ENCODE measurements at regions of chr1 and their contacts with region 1.

Region 1: DNA sequence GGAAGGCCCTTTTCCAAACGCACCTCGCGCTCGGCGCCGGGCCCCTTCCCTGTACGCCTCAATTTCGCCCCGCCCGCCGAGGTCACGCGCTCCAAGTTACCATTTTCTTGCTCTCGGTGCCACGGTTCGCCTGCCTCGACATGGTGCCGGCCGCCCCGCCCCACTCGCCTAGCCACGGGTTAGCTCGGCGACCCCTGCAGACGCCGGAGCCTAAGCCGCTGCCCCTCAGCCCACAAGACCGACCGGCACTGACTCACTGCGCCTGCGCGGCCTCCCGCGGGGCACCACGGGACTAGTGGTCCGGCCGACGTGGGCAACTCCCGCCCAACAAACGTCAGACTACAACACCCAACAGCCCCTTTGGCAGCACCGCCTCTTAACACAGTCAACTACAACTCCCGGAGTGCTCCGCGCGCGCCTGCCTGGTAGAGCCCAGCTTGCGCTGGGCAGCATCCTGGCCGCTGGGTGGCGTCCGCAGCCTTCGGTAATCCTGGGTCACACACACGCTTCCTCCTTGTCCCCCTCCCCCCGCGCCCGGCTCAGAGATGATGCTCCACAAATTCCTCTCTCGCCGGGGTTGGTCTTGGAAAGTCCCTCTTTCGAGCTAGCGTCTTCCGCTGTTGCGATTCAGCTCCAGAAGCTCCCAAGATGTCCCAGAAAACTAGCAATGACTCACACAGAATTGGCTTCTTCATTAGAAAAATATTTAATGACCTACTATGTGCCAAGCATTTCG is at the start of gene TRAPPC3:
- DNase-seq: peak; percentile 100
- H3K4me3 ChIP-seq: peak within 1 kb of the TSS; percentile 62
- H3K27ac ChIP-seq: peak within 1 kb of the TSS; percentile 80
- H3K4me1 ChIP-seq: peaks cover 33% of the 10 kb centered on the region
- H3K27me3 ChIP-seq: no peaks in the 10 kb centered on the region
- CTCF ChIP-seq: peak; percentile 99
- total RNA-seq, gene TRAPPC3: 86.5 and 86.6 TPM in 2 replicates

Region 2: GRCh38 chr1:36081926-36082485 is 67.4 kb before region 1 on chr1:
- CTCF ChIA-PET with region 1: no interaction called
- POLR2A ChIA-PET with region 1: no interaction called
- intact Hi-C with region 1: no loop called
- DNase-seq: no peak
- H3K4me3 ChIP-seq: no peak overlapping the region
- H3K27ac ChIP-seq: no peak overlapping the region
- H3K4me1 ChIP-seq: no peaks in the 10 kb centered on the region
- H3K27me3 ChIP-seq: no peaks in the 10 kb centered on the region
- CTCF ChIP-seq: no peak

Region 3: GRCh38 chr1:36162680-36163239 is 13.4 kb after region 1 on chr1:
- CTCF ChIA-PET with region 1: interaction called, 4 read pairs
- POLR2A ChIA-PET with region 1: interaction called, 15 read pairs
- intact Hi-C with region 1: no loop called
- DNase-seq: no peak
- H3K4me3 ChIP-seq: no peak overlapping the region
- H3K27ac ChIP-seq: no peak overlapping the region
- H3K4me1 ChIP-seq: peaks cover 34% of the 10 kb centered on the region
- H3K27me3 ChIP-seq: no peaks in the 10 kb centered on the region
- CTCF ChIP-seq: no peak

Region 4: GRCh38 chr1:36199934-36200741 is 50.7 kb after region 1 on chr1:
- CTCF ChIA-PET with region 1: interaction called, 10 read pairs
- POLR2A ChIA-PET with region 1: no interaction called
- intact Hi-C with region 1: no loop called
- DNase-seq: no peak
- H3K4me3 ChIP-seq: no peak overlapping the region
- H3K27ac ChIP-seq: no peak overlapping the region
- H3K4me1 ChIP-seq: no peaks in the 10 kb centered on the region
- H3K27me3 ChIP-seq: no peaks in the 10 kb centered on the region
- CTCF ChIP-seq: no peak

Region 5: DNA sequence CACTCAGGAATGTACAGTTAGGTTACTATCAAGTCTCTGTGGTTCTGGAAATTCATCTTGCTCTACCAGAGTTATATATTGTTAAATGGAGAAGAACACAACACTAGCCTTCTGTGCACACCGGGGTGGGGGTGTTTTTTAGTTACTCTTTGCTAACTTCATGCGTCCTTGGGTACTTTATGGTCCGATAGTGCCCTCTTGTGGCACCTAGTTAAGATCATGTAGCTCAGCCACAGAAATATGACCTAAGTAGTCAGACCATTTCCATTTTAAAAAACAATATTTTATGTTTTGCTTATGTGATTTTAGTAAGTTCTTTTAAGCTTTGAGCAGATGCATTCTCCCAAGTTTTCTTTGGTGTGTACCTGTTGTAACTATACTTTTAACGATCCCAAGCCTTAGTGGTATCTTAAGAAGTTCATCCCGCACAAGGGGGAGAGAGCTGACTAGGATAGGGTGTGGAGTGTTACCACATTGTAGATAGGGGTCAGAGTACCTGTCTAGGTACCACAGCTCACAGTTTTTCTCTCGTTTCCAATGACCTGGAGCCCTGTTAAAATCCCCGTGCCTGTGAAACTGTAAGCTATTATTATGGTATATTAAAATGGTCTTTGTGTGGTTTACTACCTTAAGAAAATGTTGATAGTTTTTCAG is 136.2 kb after region 1 on chr1:
- CTCF ChIA-PET with region 1: interaction called, 16 read pairs
- POLR2A ChIA-PET with region 1: no interaction called
- intact Hi-C with region 1: loop called (anchors 1 kb)
- DNase-seq: peak; percentile 85
- H3K4me3 ChIP-seq: no peak overlapping the region
- H3K27ac ChIP-seq: no peak overlapping the region
- H3K4me1 ChIP-seq: peaks cover 21% of the 10 kb centered on the region
- H3K27me3 ChIP-seq: no peaks in the 10 kb centered on the region
- CTCF ChIP-seq: peak; percentile 82

Region 6: GRCh38 chr1:36420836-36421664 is 271.6 kb after region 1 on chr1:
- CTCF ChIA-PET with region 1: no interaction called
- POLR2A ChIA-PET with region 1: no interaction called
- intact Hi-C with region 1: loop called (anchors 2 kb)
- DNase-seq: peak; percentile 90
- H3K4me3 ChIP-seq: no peak overlapping the region
- H3K27ac ChIP-seq: no peak overlapping the region
- H3K4me1 ChIP-seq: peaks cover 5% of the 10 kb centered on the region
- H3K27me3 ChIP-seq: no peaks in the 10 kb centered on the region
- CTCF ChIP-seq: peak; percentile 94

Region 7: GRCh38 chr1:36664571-36665287 is 515.3 kb after region 1 on chr1:
- CTCF ChIA-PET with region 1: no interaction called
- POLR2A ChIA-PET with region 1: no interaction called
- intact Hi-C with region 1: no loop called
- DNase-seq: no peak
- H3K4me3 ChIP-seq: no peak overlapping the region
- H3K27ac ChIP-seq: no peak overlapping the region
- H3K4me1 ChIP-seq: no peaks in the 10 kb centered on the region
- H3K27me3 ChIP-seq: peaks cover 75% of the 10 kb centered on the region
- CTCF ChIP-seq: no peak

Measured in A673 (cell line).